ENCODE measurements at regions of chr14 and their contacts with region 1.

Region 1: DNA sequence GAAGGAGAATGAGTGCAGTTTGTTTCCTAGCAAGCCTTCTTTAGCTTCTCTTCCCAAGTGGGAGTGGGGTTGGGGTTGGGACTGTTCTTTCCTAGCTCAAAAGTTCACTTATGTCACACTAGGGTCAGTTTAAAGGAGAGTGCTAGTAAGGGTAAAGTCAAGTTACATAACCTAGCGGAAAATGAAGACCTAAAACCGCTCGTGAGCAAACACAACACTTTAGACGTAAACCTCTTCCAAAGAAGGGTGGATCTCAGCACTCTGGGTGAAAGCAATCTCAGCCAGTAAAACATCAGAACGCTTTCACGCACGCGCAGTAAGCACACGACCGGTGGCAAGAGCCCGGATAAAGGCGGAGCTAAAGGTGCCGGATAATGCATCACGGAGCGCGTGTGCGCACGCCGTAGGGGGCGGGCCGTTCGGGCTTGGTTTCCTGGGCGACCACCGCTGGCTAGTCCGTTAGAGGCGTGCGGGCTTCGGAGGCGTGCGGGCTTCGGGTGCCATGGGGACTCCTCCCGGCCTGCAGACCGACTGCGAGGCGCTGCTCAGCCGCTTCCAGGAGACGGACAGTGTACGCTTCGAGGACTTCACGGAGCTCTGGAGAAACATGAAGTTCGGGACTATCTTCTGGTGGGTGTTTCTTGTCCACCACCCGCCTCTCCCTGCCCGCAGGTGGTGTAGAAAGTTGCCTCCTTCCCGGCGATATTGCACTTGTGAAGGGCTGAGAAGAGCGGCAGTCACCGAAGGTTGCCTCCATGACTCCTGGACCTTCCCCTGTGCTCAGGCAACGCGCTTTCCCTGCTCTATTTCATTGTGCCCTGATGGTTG is at the start of gene SNAPC1:
- DNase-seq: peak; percentile 89
- ATAC-seq: peak; percentile 99
- H3K4me3 ChIP-seq: peak within 1 kb of the TSS; percentile 76 to 78
- H3K27ac ChIP-seq: peak within 1 kb of the TSS; percentile 94
- H3K4me1 ChIP-seq: peaks cover 5% of the 10 kb centered on the region; the same call in 1 of the 2 replicates
- H3K27me3 ChIP-seq: no peaks in the 10 kb centered on the region
- CTCF ChIP-seq: no peak
- total RNA-seq, gene SNAPC1: 8.6 TPM

Region 2: GRCh38 chr14:61456720-61457119 is 305.5 kb before region 1 on chr14:
- CTCF ChIA-PET with region 1: no interaction called
- POLR2A ChIA-PET with region 1: interaction called, 15 read pairs
- in situ Hi-C with region 1: no loop called
- intact Hi-C with region 1: no loop called
- DNase-seq: no peak
- ATAC-seq: peak; percentile 91
- H3K4me3 ChIP-seq: no peak overlapping the region
- H3K27ac ChIP-seq: no peak overlapping the region
- H3K4me1 ChIP-seq: no peaks in the 10 kb centered on the region
- H3K27me3 ChIP-seq: no peaks in the 10 kb centered on the region
- CTCF ChIP-seq: peak; percentile 85

Measured in Panc1 (cell line).